ENCODE measurements at regions of chr6 and their contacts with region 1.

Region 1: GRCh38 chr6:56555438-56555872 is 87.2 kb downstream of the DST start:
- DNase-seq: no peak
- ATAC-seq: peak; percentile 93

Region 2: DNA sequence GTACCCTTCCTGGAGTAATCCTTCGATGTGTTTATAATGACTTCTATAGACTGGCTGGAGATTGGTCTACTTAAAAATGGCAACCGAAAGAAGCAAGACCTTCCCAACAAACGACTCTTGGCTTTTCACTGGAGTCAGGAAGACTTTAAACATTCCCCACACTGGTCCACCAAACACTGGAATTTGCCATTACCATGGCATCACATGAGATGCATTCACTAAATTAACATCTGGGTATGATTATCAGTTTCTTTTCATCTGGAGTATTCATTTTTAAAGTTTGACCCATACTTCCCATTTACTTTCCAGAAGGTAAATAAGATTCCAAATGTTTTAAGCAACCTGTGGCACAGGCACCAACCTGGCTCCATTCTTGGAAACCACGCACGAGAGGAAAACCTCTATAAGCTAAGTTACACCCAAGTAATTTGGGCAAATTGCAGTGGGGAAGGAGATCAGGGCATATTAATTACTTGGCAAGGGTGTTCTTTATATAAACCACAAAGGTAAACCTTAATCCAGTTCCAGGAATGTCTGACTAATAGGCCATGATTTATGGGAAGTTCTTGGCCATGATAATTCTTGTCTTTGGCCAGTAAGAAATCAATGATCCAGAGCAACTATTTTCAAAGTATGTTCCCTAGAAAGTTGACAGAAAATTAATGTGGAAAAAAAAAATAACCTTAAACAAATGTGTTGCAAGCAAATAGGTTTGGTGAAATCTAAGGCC is 118.1 kb before region 1 on chr6:
- intact Hi-C with region 1: no loop called
- DNase-seq: no peak
- ATAC-seq: no peak

Region 3: DNA sequence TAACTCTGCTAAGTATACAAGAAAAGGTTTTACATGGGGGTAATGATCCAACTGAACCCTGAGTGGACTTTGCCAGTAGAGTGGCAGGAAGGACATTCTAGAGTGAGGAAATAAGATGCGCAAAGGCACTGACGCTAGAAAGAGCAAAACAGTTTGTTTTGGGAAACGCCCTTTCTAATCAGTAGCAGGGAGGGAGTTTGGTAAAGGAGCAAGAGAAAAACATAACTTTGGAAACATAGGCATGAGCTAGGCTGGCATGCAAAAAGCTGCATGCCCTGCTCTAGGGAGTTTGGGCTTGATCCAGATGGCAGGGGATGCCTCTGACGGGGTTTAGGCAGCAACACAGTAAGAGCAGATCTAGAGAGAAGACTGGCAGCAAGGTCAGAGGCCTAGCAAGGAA is 47.9 kb before region 1 on chr6:
- intact Hi-C with region 1: loop called (anchors 5 kb)
- DNase-seq: no peak
- ATAC-seq: peak; percentile 78

Region 4: GRCh38 chr6:56521454-56521853 is 34.0 kb before region 1 on chr6:
- intact Hi-C with region 1: no loop called
- DNase-seq: no peak
- ATAC-seq: no peak